ENCODE measurements at regions of chr7 and their contacts with region 1.

Region 1: DNA sequence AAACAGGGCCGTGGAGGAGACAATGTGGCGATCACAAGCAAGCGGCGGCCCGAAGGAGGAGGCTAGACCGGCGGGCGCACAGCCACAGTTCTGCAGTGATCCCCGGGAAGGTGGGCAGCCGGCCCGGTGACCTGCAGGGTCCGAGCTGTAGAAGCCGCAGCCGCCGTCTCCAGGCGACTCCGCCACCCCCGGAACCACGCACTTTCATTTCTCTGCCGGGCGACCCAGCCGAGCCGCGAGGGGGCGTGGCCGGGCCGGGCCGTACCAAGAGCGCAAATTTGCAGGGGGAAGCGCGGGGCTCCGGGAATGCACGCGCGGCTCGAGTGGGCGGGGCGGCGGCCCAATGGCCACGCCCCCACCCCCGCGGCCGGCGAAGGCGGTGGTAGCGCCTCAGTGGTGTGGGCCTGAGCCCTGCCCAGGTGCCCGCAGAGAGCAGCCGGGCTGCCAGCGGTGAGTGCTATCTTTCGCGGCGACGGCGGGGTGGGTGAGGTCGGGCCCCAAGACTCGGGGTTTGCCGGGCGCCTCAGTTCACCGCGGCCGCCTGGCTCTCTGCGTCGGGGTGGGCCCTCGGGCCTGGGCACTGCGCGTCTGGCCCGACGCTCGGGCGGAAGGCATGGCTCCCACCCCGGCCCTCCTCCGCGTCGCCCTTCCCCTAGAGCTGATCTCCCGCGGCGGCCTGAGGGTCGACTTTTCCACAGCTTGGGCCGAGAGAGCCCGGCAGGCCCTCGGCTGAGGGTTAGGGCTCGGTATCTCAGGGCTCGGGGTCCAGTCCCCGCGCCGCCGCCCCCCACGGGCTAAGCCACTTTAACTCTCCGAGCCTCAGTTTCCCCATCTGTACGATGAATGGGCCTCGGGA is at the start of gene POR:
- DNase-seq: peak; percentile 96 to 97
- ATAC-seq: peak; percentile 97 to 100 (median 98)
- H3K4me3 ChIP-seq: peak within 1 kb of the TSS; percentile 98
- H3K27ac ChIP-seq: peak within 1 kb of the TSS; percentile 83
- H3K4me1 ChIP-seq: peaks cover 30% of the 10 kb centered on the region
- H3K27me3 ChIP-seq: no peaks in the 10 kb centered on the region
- CTCF ChIP-seq: peak; percentile 19
- total RNA-seq, gene POR: 48.8 to 206 (median 117) TPM

Region 2: DNA sequence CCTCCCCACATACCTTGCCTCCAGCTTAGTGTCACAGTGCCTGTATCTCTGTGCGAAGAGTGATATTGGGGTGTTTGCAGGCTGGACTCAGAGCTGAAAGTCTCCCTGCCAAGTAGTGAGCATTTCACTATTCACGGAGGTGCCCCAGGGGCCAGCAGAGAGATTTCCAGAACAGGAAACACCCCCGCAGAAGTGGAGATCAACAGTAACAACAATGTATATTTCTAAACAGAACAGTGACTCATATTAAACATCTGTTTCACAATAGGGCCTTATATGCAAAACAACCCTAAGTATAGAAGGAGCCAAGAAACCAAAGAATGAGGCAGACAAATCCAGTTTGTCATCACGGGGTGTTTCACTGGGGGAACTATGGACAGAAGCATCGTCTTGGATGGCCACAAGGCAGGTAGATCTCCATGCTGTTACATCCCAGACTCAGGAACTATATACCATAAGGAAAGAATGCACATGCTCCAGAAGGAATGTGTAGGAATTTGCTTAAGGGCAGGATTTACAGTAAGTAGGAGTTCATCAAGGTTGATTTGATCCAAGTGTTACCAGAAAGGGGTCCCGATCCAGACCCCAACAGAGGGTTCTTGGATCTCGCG is 72.0 kb before region 1 on chr7:
- intact Hi-C with region 1: no loop called
- DNase-seq: no peak
- ATAC-seq: no peak
- H3K4me3 ChIP-seq: no peak overlapping the region
- H3K27ac ChIP-seq: no peak overlapping the region
- H3K4me1 ChIP-seq: no peaks in the 10 kb centered on the region
- H3K27me3 ChIP-seq: no peaks in the 10 kb centered on the region
- CTCF ChIP-seq: no peak

Region 3: GRCh38 chr7:75878769-75879611 is 36.0 kb before region 1 on chr7 and contains the start of gene RHBDD2:
- intact Hi-C with region 1: loop called in 1 of 2 experiments (anchors 5 kb)
- DNase-seq: peak; percentile 96 to 98
- ATAC-seq: peak; percentile 99 to 100 (median 100)
- H3K4me3 ChIP-seq: peak within 1 kb of the TSS; percentile 77
- H3K27ac ChIP-seq: peak within 1 kb of the TSS; percentile 63
- H3K4me1 ChIP-seq: peaks cover 17% of the 10 kb centered on the region
- H3K27me3 ChIP-seq: no peaks in the 10 kb centered on the region
- CTCF ChIP-seq: peak; percentile 21
- total RNA-seq, gene RHBDD2: 18.3 to 32.0 (median 24.6) TPM

Region 4: DNA sequence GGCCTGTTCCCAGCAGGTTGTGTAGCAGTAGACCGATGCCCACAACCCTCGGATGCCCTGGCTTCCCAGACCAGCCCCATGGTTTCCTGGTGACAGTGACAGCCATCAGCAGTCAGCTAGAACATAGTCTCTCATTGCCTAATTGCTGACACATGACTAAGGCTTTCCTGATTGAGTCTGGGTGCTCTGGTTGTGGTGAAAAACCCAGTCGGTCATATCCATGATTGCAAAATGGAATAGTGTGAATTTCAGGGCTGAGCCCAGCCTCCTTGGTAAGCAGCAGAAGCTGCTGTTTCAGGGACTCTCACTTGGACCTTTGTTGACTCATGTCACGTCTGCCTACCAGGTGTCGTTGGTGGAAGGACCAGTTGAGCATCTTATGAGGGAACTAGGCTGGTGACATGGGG is 36.6 kb after region 1 on chr7:
- intact Hi-C with region 1: no loop called
- DNase-seq: peak; percentile 69 to 72
- ATAC-seq: peak; percentile 78 to 86 (median 82)
- H3K4me3 ChIP-seq: no peak overlapping the region
- H3K27ac ChIP-seq: peak overlapping the region; percentile 88
- H3K4me1 ChIP-seq: peaks cover 64% of the 10 kb centered on the region
- H3K27me3 ChIP-seq: no peaks in the 10 kb centered on the region
- CTCF ChIP-seq: no peak

Region 5: GRCh38 chr7:75962607-75963380 is 47.8 kb after region 1 on chr7:
- intact Hi-C with region 1: loop called (anchors 5 kb)
- DNase-seq: peak in 1 of 2 donors; percentile 64
- ATAC-seq: peak in 3 of 4 donors; percentile 27 to 65 (median 45)
- H3K4me3 ChIP-seq: no peak overlapping the region
- H3K27ac ChIP-seq: peak overlapping the region; percentile 70
- H3K4me1 ChIP-seq: peaks cover 52% of the 10 kb centered on the region
- H3K27me3 ChIP-seq: no peaks in the 10 kb centered on the region
- CTCF ChIP-seq: no peak

Region 6: DNA sequence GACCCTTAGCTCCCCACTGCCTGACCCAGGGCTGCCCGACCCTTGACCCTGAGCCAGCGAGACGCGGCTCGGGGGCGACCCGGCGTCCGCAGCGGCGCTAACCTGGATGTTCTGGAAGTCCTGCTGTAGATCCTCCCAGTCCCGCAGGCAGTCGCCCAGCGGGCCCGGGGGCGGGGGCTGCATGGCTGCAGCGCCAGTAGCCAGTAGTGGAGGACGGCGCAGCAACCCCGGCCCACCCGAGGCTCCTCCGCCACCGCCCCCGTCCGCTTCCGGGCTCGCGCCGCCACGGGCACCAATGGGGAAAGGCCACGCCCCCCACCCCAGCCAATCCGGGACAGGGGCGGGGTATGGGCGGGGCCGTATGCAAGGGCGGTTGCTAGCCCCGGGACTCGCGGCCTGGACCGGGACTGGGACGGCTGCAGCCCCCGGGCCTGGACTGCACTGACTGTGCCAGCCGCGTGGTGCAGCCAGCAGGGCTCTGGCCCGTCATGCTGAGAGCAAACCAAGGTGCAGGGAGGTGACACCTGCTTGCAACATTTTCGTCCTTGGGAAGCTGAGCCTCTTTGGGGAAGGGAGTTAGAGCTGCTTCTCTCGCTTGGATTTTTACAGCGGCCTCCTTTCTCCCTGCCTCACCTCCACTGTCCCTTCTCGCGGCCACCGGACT is 79.6 kb after region 1 on chr7 and contains the start of gene TMEM120A:
- intact Hi-C with region 1: loop called in 1 of 2 experiments (anchors 1 kb)
- DNase-seq: peak; percentile 99
- ATAC-seq: peak; percentile 87 to 95 (median 90)
- H3K4me3 ChIP-seq: peak within 1 kb of the TSS; percentile 82
- H3K27ac ChIP-seq: peak within 1 kb of the TSS; percentile 85
- H3K4me1 ChIP-seq: peaks cover 32% of the 10 kb centered on the region
- H3K27me3 ChIP-seq: no peaks in the 10 kb centered on the region
- CTCF ChIP-seq: no peak
- total RNA-seq, gene TMEM120A: 70.1 to 103 (median 87.1) TPM

Region 7: GRCh38 chr7:76246804-76247389 is 331.9 kb after region 1 on chr7:
- intact Hi-C with region 1: no loop called
- DNase-seq: no peak
- ATAC-seq: no peak
- H3K4me3 ChIP-seq: no peak overlapping the region
- H3K27ac ChIP-seq: no peak overlapping the region
- H3K4me1 ChIP-seq: no peaks in the 10 kb centered on the region
- H3K27me3 ChIP-seq: peaks cover 0 to 5% (median 0%) of the 10 kb centered on the region in 3 donors
- CTCF ChIP-seq: no peak